ENCODE measurements at regions of chr11 and their contacts with region 1.

Region 1: GRCh38 chr11:36443661-36444060 is 66.4 kb downstream of the TRAF6 start:
- DNase-seq: no peak
- H3K4me3 ChIP-seq: no peak overlapping the region
- H3K27ac ChIP-seq: no peak overlapping the region
- H3K4me1 ChIP-seq: no peaks in the 10 kb centered on the region
- H3K27me3 ChIP-seq: no peaks in the 10 kb centered on the region
- CTCF ChIP-seq: no peak
- POLR2A ChIP-seq: no peak

Region 2: GRCh38 chr11:36455658-36456111 is 12.0 kb after region 1 on chr11:
- CTCF ChIA-PET with region 1: no interaction called
- POLR2A ChIA-PET with region 1: no interaction called
- dilution Hi-C with region 1: no loop called
- intact Hi-C with region 1: no loop called
- DNase-seq: peak; percentile 54
- H3K4me3 ChIP-seq: no peak overlapping the region
- H3K27ac ChIP-seq: peak overlapping the region; percentile 30
- H3K4me1 ChIP-seq: no peaks in the 10 kb centered on the region
- H3K27me3 ChIP-seq: no peaks in the 10 kb centered on the region
- CTCF ChIP-seq: no peak
- POLR2A ChIP-seq: no peak

Region 3: DNA sequence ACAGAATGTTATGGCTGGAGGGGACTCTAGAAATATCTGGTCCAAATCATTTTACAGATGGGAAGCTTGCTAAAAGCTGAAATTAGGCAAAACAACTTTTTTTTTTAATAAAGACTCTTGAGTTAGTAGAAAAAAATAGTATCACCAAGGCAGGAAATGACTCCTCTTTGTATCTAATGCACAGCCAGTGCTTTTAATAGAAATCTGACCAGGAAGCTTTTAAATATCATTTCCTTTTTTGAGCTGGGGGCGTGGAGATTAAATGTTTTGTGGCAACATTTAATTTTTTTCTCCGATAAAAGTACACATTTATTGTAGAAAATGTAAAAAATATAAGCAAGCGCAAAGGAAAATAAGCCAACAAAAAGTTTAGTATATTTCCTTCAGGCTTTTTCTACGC is 44.0 kb after region 1 on chr11:
- CTCF ChIA-PET with region 1: no interaction called
- POLR2A ChIA-PET with region 1: no interaction called
- dilution Hi-C with region 1: no loop called
- intact Hi-C with region 1: loop called (anchors 1 kb)
- DNase-seq: peak; percentile 63
- H3K4me3 ChIP-seq: peak overlapping the region in 1 of 3 experiments; percentile 50
- H3K27ac ChIP-seq: peak overlapping the region; percentile 72
- H3K4me1 ChIP-seq: peaks cover 19% of the 10 kb centered on the region
- H3K27me3 ChIP-seq: no peaks in the 10 kb centered on the region
- CTCF ChIP-seq: no peak
- POLR2A ChIP-seq: no peak

Region 4: DNA sequence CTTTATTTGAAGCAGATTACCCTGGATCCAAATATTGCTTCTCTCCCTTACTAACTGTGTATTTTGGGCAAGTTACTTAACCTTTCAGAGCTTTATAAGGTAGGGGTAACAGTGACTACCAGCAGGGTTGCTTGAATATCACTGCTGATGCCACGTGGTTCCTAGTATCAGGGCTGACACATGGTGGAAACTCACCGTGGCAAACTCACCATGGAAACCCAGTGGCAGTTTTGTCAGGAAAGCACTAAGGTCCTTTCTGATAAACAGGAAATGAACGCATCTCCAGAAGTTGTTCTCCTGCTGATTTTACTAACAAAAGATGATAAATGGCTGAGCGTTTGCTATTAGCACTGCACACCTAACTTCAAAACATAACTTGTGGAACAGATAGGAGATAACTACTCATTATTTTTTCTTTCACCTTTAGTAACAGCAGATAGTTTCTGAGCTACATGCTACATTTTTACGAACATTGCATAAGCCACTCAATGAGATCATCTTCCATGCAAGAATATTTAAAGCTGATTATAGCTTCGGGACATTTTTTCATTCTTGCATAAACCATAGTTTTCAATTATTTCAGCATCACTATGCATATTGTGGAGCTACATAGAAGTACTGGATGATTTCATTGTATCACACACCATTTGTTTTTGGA is 214.1 kb after region 1 on chr11:
- CTCF ChIA-PET with region 1: no interaction called
- POLR2A ChIA-PET with region 1: no interaction called
- dilution Hi-C with region 1: no loop called
- intact Hi-C with region 1: no loop called
- DNase-seq: no peak
- H3K4me3 ChIP-seq: no peak overlapping the region
- H3K27ac ChIP-seq: no peak overlapping the region
- H3K4me1 ChIP-seq: no peaks in the 10 kb centered on the region
- H3K27me3 ChIP-seq: no peaks in the 10 kb centered on the region
- CTCF ChIP-seq: no peak
- POLR2A ChIP-seq: no peak

Measured in endothelial cell of umbilical vein (primary cell).